Dendritic cell treated with granulocyte-macrophage colony-stimulating factor and Interleukin-4, amounts not matched to agents 40 ng/mL and 50 ng/mL, for 4 days (primary cell): ENCODE measurements at regions of chr2 and their contacts with region 1.

Region 1: DNA sequence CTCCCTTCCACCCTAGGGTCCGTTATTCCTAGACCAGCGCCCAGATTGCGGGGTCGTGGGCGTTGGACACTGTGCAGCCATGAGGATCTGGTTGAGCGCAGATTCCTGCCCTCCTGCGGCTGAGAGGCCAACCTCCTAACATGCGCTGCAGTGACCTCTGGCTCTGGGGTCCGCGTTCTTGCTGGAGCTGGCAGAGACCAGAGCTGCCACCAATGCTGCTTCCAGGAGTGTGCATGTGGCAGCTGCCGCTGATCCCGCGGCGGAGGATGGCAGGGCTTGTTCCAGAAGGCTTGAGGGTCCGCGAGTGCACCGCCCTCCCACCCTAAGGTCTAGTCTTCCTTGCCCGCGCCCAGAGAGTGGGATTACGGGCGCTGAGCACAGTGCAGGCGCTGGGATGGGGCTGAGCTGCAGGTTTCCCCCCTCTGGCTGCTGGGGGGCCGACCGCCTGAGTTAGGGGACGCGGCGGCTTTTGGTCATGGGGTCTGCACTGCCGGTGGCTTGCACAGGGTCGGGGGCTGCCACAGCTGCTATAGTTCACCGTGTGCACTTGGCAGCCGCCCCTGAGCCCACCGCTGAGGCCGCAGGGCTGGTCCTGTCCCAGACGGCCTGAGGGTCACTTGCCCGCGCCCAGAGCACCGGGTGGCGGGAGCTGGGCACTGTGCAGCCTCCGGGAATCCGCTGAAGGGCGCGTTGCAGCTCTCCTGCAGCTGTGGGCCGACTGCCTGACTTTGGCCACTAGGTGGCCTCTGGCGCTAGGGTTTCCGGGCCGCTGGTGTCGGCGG is 145.9 kb downstream of the CCDC74A start:
- H3K4me3 Mint-ChIP-seq: peak overlapping the region; percentile 37
- H3K27ac Mint-ChIP-seq: no peak overlapping the region
- H3K4me1 Mint-ChIP-seq: peaks cover 49% of the 10 kb centered on the region
- H3K27me3 Mint-ChIP-seq: peaks cover 51% of the 10 kb centered on the region

Region 2: DNA sequence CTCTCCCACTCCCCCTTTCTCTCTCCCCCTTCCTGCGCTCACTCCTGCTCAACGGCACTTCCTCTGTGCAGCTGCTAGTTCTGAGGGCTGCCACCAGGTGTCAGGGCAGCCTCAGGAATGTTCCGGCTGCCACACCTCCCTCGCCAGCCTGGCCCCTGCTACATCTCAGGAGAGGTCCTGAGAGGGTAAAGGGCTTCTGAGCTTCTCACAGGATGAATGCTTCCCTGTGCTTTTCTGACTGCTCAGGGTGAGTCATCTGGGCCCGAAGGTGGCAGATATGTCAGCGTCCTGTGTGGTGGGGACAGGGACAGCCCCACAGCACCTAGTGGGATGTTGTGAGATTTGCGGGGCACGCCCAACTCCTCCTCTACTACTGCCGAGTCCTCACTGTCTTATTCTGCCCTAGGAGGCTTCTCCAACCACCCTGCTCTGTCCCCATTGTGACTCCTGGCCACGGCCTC is 519.5 kb before region 1 on chr2:
- intact Hi-C with region 1: loop called (anchors 5 kb)
- H3K4me3 Mint-ChIP-seq: no peak overlapping the region
- H3K27ac Mint-ChIP-seq: no peak overlapping the region
- H3K4me1 Mint-ChIP-seq: peaks cover 22% of the 10 kb centered on the region
- H3K27me3 Mint-ChIP-seq: peaks cover 2% of the 10 kb centered on the region

Region 3: DNA sequence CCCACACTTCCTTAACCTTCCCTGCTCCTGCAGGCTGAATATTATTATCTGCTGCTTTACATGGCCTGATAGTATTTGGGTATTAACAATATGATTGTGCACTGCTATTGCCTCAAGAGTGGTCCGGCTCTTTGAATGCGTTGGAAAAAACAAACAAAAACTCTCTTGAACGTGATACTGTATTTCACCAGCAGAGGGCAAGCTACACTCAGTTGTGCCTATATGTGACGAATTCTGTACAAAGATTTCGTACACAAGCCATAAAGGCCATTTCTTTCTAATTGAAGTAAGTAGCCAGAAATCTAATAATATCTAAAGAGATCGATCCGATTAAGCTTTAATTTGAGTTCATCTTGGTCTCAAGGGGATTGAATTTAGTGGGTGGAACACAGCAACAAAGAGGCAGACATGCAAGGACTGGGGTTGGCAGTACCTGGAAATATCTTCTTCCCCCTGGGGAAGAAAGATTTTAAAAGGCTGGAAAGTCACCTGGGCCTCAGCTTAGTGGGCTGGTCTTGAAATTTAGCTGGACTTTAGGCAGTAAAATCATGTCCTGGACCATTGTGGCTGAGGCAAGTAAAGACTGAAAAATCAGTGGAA is 260.3 kb before region 1 on chr2:
- intact Hi-C with region 1: loop called (anchors 2 kb)
- H3K4me3 Mint-ChIP-seq: no peak overlapping the region
- H3K27ac Mint-ChIP-seq: no peak overlapping the region
- H3K4me1 Mint-ChIP-seq: no peaks in the 10 kb centered on the region
- H3K27me3 Mint-ChIP-seq: peaks cover 12% of the 10 kb centered on the region

Region 4: GRCh38 chr2:131658789-131659131 is 14.8 kb before region 1 on chr2:
- intact Hi-C with region 1: no loop called
- H3K4me3 Mint-ChIP-seq: no peak overlapping the region
- H3K27ac Mint-ChIP-seq: no peak overlapping the region
- H3K4me1 Mint-ChIP-seq: no peaks in the 10 kb centered on the region
- H3K27me3 Mint-ChIP-seq: peaks cover 4% of the 10 kb centered on the region

Region 5: DNA sequence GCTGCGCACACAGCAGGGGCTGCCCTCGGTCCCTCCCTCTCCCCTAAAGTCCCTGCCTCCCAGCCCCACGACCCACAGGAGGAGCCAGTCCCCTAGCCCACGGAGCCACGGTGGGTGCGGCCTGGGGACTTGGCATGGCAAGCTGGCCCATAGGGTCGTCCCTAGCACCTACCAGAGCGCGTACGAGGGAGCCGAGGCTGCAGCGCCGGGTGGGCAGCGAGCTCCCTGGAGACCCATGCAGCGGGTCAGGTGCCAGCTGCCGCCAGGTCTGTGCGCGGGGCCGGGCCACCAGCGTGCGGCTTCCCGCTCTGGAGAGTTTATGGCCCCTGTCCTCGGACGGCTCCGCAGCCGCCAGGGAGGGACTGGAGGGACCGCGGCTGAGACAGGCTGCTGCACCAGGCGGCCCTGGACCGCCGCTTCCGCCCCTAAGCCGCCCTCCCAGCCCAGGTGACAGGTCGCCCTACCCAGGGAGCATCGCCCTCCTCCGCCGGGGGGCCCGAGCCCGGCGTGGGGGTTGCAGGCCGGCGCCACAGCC is 127.7 kb after region 1 on chr2:
- intact Hi-C with region 1: loop called (anchors 10 kb)
- H3K4me3 Mint-ChIP-seq: no peak overlapping the region
- H3K27ac Mint-ChIP-seq: no peak overlapping the region
- H3K4me1 Mint-ChIP-seq: no peaks in the 10 kb centered on the region
- H3K27me3 Mint-ChIP-seq: peaks cover 25% of the 10 kb centered on the region